ENCODE measurements at regions of chr1 and their contacts with region 1.

Region 1: DNA sequence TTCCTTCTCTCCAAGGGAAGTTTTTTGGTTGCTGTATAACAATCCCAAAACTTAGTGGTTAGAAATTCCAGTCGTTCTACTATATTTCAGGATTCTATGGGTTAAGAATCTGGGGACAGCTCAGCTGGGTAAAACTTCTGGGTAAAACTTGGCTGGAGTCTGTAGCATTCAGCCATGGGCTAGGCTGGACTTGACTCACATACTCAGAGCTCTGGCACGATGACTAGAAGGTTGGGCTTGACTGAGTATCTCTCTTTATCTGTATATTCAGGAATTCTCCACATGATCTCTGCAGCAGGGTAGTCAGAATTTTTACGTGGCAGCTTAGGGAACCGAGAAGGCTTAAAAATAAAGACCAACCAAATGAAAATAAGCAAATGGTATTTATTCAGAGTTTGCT is 28.2 kb upstream of the HRNR start:
- DNase-seq: peak; percentile 78
- H3K4me3 ChIP-seq: no peak overlapping the region
- H3K27ac ChIP-seq: peak overlapping the region; percentile 47
- H3K4me1 ChIP-seq: peaks cover 18% of the 10 kb centered on the region
- H3K27me3 ChIP-seq: no peaks in the 10 kb centered on the region
- CTCF ChIP-seq: no peak

Region 2: DNA sequence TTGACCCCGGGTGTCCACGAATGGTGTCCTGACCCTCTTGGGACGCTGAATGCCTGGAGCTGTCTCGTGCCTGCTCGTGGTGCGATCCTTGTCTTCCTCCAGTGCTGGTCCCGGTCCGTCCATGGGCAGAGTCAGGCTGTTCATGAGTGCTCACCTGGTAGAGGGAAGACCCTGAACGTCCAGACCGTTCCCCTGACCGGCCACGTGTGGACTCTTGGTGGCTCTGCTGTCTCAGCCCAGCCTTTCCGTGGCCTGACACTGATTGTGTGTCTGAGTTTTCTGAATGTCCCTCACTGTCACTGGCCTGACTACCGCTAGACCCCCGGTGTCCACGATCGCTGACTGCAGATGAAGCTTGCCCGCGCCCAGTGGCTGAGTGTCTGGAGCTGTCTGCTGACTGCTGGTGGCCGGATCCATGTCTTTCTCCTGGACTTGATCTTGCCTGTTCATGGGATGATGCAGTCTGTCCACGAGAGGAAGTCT is 61.2 kb after region 1 on chr1:
- CTCF ChIA-PET with region 1: no interaction called
- dilution Hi-C with region 1: loop called (anchors 5 kb)
- in situ Hi-C with region 1: no loop called
- intact Hi-C with region 1: no loop called
- DNase-seq: no peak
- H3K4me3 ChIP-seq: no peak overlapping the region
- H3K27ac ChIP-seq: no peak overlapping the region
- H3K4me1 ChIP-seq: no peaks in the 10 kb centered on the region
- H3K27me3 ChIP-seq: no peaks in the 10 kb centered on the region
- CTCF ChIP-seq: no peak

Region 3: DNA sequence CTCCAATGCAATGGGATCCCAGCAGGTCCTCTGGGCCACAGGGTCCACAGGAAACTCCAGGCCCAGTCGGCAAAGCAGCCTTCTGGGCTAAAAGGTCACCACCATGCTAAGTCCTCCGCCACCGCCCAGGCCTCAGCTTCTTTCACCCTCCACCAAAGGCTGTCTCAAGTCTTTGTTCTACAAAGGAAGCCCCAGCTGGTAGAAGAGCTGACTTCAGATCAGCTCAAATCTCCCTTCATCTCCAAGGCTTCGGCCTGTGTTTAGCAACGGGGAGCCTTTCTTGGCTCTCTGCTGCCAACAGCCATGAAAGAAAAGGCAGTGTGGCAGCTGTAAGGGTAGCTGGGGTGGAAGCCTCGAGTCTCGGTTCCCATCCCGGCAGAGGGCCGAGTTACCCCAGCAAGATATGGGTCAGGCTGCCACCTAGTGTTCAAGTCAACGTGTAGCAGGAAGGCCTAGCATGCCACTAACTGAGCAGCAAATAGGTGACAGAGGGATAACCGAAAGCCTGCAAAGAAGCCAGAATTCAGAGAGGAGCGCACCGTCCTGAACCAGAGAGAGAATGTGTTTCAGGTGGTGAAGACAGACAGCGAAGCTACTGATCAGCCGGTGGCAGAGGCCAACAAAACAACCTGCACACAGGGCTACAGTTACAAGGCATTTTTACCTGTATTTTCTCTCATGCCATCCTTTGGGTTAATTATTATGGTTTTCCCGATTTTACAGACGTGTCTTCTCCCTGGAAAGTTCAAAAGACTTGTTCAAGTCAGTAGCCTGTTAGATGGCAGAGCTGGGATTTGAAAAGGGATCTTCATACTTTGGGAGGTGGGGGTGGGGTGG is 188.7 kb after region 1 on chr1:
- CTCF ChIA-PET with region 1: no interaction called
- dilution Hi-C with region 1: no loop called
- in situ Hi-C with region 1: no loop called
- intact Hi-C with region 1: no loop called
- DNase-seq: peak; percentile 68
- H3K4me3 ChIP-seq: no peak overlapping the region
- H3K27ac ChIP-seq: no peak overlapping the region
- H3K4me1 ChIP-seq: peaks cover 34% of the 10 kb centered on the region
- H3K27me3 ChIP-seq: no peaks in the 10 kb centered on the region
- CTCF ChIP-seq: peak; percentile 91 to 92